ENCODE measurements at regions of chr1 and their contacts with region 1.

Region 1: GRCh38 chr1:44594871-44595746 is 79.2 kb downstream of the TMEM53 start:
- DNase-seq: peak; percentile 71 to 89 (median 77)
- H3K4me3 ChIP-seq: no peak overlapping the region
- H3K27ac ChIP-seq: no peak overlapping the region
- H3K4me1 ChIP-seq: no peaks in the 10 kb centered on the region
- H3K27me3 ChIP-seq: peaks cover 23% of the 10 kb centered on the region
- CTCF ChIP-seq: peak; percentile 96

Region 2: GRCh38 chr1:44220001-44220733 is 374.9 kb before region 1 on chr1:
- intact Hi-C with region 1: loop called (anchors 10 kb)
- DNase-seq: no peak
- H3K4me3 ChIP-seq: no peak overlapping the region
- H3K27ac ChIP-seq: no peak overlapping the region
- H3K4me1 ChIP-seq: peaks cover 0 to 8% (median 5%) of the 10 kb centered on the region in 3 donors
- H3K27me3 ChIP-seq: no peaks in the 10 kb centered on the region
- CTCF ChIP-seq: no peak

Region 3: DNA sequence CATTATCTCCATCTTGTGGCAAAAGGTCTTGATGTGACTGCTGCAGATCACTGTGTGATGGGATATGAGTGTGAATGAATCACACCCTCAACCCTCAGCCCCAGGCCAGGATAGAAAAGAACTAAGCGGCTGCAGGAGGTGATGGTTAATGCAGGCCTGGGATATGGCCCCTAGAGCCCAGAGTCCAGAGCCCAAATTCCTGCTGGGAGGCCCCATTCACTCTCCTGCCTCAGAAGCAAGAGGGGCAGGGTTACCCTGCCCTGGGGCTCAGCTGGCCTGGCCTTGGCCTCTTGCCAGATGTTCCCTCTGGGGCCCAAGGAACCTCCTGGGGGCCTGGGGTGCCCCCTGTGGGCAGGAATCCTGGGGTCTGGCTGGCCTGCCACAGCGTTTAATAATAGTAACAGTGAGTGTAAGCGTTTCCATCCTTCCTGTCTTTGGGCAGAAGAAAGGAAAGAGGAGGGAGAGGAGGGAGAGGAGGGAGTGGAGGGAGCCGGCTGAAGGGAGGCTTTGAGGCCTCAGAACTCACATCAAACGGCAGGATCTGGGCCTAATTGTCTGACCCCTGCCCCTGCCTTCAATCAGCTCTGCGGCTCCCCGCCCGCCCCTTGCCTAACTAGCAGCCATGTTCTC is 355.7 kb before region 1 on chr1:
- intact Hi-C with region 1: no loop called
- DNase-seq: peak in 4 of 5 donors; percentile 41 to 80 (median 62)
- H3K4me3 ChIP-seq: no peak overlapping the region
- H3K27ac ChIP-seq: peak overlapping the region; percentile 35 to 85
- H3K4me1 ChIP-seq: peaks cover 0 to 32% (median 18%) of the 10 kb centered on the region in 3 donors
- H3K27me3 ChIP-seq: no peaks in the 10 kb centered on the region
- CTCF ChIP-seq: no peak

Region 4: DNA sequence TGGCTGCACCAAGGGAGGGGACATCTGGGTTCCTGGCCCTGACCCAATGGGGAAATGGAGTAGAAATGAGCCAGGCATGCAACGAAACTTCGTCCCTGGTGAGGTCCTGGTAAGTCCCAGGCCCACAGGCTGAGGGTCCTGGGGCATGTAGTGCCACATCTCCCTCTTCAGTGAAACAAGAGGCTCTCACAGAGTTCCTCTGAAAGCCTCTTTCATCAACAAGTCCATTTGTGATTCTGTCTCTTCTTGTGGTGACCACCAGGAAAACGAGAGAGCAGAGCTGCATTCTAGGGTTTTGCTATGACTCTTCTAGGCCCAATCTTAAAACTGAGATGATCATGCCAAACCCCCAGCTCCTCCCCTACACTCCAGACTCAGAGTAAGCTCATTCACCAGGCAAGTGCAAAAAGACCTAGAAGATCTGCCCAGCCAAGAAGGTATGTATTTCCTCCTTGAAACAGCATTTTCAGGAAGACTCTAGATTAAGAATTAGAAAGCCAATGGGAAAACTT is 214.4 kb before region 1 on chr1:
- intact Hi-C with region 1: loop called (anchors 10 kb)
- DNase-seq: no peak
- H3K4me3 ChIP-seq: no peak overlapping the region
- H3K27ac ChIP-seq: no peak overlapping the region
- H3K4me1 ChIP-seq: no peaks in the 10 kb centered on the region
- H3K27me3 ChIP-seq: peaks cover 3% of the 10 kb centered on the region
- CTCF ChIP-seq: no peak

Region 5: GRCh38 chr1:44489481-44489880 is 105.6 kb before region 1 on chr1:
- intact Hi-C with region 1: no loop called
- DNase-seq: no peak
- H3K4me3 ChIP-seq: no peak overlapping the region
- H3K27ac ChIP-seq: no peak overlapping the region
- H3K4me1 ChIP-seq: no peaks in the 10 kb centered on the region
- H3K27me3 ChIP-seq: no peaks in the 10 kb centered on the region
- CTCF ChIP-seq: no peak

Measured in kidney (tissue), 22 donors.